Cardiac septum (tissue), 1 donor: ENCODE measurements at regions of chr1 and their contacts with region 1.

Region 1: GRCh38 chr1:35030756-35031446 is 844 bp downstream of the ZMYM6 start:
- DNase-seq: no peak

Region 2: GRCh38 chr1:35079003-35079930 is 48.4 kb after region 1 on chr1 and contains the start of gene ZMYM1:
- intact Hi-C with region 1: loop called (anchors 1 kb)
- DNase-seq: peak; percentile 93
- total RNA-seq, gene ZMYM1: 6.9 TPM